PC-9 (cell line): ENCODE measurements at regions of chr2 and their contacts with region 1.

Region 1: DNA sequence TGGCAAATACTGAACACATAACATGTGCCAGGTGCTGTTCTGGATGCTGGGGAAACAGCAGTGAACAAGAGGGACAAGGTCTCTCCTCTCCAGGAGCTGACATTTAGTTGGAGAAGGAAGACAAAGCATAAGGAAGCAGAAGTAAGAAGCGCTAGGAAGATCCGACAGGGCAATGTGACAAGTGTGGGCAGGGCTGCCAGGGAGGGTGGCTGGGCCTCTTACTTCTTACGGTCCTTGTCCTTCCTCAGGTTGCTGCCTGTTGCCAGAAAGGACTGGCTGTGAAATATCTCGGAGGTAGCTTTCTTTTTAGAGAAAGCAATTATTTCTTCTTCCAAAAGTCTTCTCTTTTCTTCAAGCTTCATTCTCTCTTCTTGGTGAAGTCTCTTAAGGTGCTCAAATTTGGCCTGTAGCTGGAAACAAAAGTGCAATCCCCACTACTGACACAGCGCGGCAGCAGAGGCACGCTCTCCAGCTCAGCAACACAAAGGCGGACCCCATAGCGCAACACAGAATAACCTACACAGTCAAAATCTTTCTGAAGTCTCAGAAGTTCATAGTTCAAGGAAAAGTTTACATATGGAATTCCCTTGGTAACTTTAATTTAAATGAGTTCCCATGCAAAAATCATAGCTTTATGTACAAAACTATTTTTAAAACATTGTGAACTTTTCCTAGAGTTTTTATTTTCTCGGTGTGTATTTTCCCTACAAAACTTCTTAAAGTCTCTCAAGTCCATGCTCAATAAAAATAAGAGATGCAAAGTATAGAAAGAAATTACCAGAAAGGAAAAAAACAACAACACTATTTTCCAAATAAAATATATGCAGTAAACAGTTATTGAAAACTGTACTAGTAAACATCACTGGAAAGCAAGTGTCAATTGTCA is 67.7 kb downstream of the SEPTIN10 start:
- DNase-seq: peak in 1 of 2 experiments; percentile 53
- H3K4me3 ChIP-seq: no peak overlapping the region
- H3K27ac ChIP-seq: no peak overlapping the region
- H3K4me1 ChIP-seq: no peaks in the 10 kb centered on the region
- H3K27me3 ChIP-seq: no peaks in the 10 kb centered on the region
- CTCF ChIP-seq: peak; percentile 92

Region 2: GRCh38 chr2:109663721-109664120 is 117.7 kb after region 1 on chr2:
- CTCF ChIA-PET with region 1: no interaction called
- POLR2A ChIA-PET with region 1: no interaction called
- intact Hi-C with region 1: loop called (anchors 5 kb)
- DNase-seq: no peak
- H3K4me3 ChIP-seq: no peak overlapping the region
- H3K27ac ChIP-seq: no peak overlapping the region
- H3K4me1 ChIP-seq: no peaks in the 10 kb centered on the region
- H3K27me3 ChIP-seq: no peaks in the 10 kb centered on the region
- CTCF ChIP-seq: no peak

Region 3: DNA sequence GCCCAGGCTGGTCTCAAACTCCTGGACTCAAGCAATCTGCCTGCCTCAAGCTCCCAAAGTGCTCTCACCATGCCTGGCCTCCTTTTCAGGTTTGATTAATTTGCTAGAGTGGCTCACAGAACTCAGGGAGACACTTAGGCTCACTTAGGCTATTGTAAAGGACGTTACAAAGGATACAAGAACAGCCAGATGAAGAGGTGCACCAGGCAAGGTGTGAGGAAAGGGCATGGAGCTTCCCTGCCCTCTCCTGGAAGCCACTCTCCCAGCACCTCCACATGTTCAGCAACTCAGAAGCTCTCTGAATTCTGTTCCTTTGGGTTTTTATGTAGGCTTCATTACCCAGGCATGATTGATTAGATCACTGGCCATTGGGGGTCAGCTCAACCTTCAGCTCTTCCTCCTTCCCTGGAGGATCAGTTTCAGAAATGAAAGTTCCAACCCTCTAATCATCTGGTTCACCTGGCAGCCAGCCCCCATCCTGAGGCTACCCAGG is 169.3 kb after region 1 on chr2:
- CTCF ChIA-PET with region 1: interaction called, 16 read pairs
- POLR2A ChIA-PET with region 1: no interaction called
- intact Hi-C with region 1: loop called (anchors 1 kb)
- DNase-seq: peak in 1 of 2 experiments; percentile 55
- H3K4me3 ChIP-seq: no peak overlapping the region
- H3K27ac ChIP-seq: no peak overlapping the region
- H3K4me1 ChIP-seq: no peaks in the 10 kb centered on the region
- H3K27me3 ChIP-seq: no peaks in the 10 kb centered on the region
- CTCF ChIP-seq: peak; percentile 70

Region 4: GRCh38 chr2:109736177-109736827 is 190.2 kb after region 1 on chr2:
- CTCF ChIA-PET with region 1: interaction called, 4 read pairs
- POLR2A ChIA-PET with region 1: no interaction called
- intact Hi-C with region 1: loop called (anchors 1 kb)
- DNase-seq: peak; percentile 38 to 55
- H3K4me3 ChIP-seq: no peak overlapping the region
- H3K27ac ChIP-seq: no peak overlapping the region
- H3K4me1 ChIP-seq: no peaks in the 10 kb centered on the region
- H3K27me3 ChIP-seq: no peaks in the 10 kb centered on the region
- CTCF ChIP-seq: peak; percentile 82